GM10248 (cell line): ENCODE measurements at regions of chr10 and their contacts with region 1.

Region 1: GRCh38 chr10:119725828-119726675 is at the start of gene INPP5F:
- DNase-seq: peak; percentile 100
- CTCF ChIP-seq: peak; percentile 27

Region 2: GRCh38 chr10:118950190-118950680 is 775.8 kb before region 1 on chr10:
- CTCF ChIA-PET with region 1: no interaction called
- POLR2A ChIA-PET with region 1: no interaction called
- DNase-seq: no peak
- CTCF ChIP-seq: no peak

Region 3: GRCh38 chr10:119705434-119705831 is 20.6 kb before region 1 on chr10:
- CTCF ChIA-PET with region 1: interaction called, 46 read pairs
- POLR2A ChIA-PET with region 1: interaction called, 27 read pairs
- DNase-seq: peak; percentile 48
- CTCF ChIP-seq: no peak

Region 4: DNA sequence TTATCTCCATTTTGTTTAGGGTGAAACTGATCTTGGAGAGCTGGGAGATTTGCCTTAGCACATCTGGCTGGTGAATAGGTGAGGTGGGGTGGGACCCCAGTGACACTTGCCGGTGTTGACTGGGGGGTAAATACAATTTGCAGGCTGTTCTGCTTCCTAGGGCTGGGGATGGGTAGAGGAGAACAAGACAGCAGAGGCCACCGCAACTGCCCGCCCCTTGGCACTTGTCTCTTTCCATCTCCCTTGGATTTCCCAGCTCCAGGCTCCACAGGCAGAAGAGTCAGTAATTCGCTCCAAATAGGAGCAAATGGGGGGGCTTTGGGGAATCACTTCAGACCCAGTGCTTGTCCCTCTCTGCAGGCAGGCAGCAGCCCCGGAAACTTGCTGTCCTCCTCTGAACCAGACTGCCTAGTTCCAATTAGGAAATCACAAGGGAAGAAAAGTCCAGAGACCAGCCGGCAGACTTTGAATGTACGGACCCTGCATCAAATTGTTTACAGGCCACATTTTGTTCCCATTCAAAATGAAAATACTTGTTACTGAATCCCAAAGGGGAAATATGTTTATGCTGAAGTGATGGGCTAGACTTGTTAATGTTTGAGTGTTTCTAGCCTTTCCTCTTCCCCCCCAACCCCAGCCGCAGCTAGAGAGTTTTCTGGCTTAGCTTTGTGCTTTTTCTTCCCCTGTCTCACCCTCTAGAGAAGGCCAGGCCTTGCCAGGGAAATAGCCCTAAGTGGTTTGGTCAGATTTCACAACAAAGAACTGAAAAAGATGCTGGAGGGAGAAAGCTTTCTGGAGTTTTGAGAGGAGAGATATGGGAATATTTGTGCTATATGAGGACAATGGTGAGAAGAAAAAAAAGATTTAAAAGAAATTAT is 10.2 kb before region 1 on chr10:
- CTCF ChIA-PET with region 1: interaction called, 15 read pairs
- POLR2A ChIA-PET with region 1: interaction called, 3 read pairs
- DNase-seq: no peak
- CTCF ChIP-seq: no peak

Region 5: GRCh38 chr10:119737827-119738226 is 11.8 kb after region 1 on chr10:
- CTCF ChIA-PET with region 1: interaction called, 28 read pairs
- POLR2A ChIA-PET with region 1: interaction called, 5 read pairs
- DNase-seq: no peak
- CTCF ChIP-seq: no peak

Region 6: DNA sequence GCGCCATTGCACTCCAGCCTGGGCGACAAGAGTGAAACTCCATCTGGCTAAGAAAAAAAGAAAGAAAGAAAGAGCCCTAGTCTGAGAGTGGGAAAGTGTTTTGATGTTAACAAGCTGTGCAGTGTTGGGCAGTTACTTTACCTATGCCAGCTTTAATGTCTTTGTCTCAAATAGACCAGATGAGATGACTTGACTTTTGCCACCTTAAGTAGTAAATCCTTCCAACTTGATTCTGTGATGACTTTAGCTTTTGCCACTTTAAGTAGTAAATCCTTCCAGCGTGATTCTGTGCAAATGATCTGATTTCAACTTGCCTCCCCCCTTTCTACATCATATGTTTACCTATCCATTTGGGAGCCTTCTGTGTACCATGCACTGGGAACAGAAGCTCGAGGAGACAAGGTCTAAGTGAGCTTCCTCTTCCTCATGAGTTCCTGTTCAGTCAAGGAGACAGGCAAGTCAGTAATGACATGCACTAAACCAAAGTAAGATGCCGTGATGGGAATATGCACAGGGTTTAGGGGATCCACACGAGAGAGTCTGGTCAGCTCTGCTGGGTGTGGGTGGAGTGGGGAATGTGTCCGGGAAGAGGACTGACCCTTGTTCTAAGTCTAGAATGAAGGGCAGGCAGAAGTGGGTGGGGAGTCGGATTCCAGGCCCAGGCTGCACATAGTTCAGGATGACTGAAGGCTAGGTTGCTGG is 17.0 kb after region 1 on chr10:
- CTCF ChIA-PET with region 1: interaction called, 28 read pairs
- POLR2A ChIA-PET with region 1: interaction called, 5 read pairs
- DNase-seq: no peak
- CTCF ChIP-seq: no peak